AG04450 (cell line): ENCODE measurements at regions of chr2 and their contacts with region 1.

Region 1: GRCh38 chr2:71331581-71332434 is at the start of gene ZNF638:
- DNase-seq: peak; percentile 78
- H3K4me3 ChIP-seq: peak within 1 kb of the TSS; percentile 98
- H3K27ac ChIP-seq: peak within 1 kb of the TSS; percentile 80
- H3K27me3 ChIP-seq: peaks cover 2% of the 10 kb centered on the region
- CTCF ChIP-seq: peak; percentile 67
- polyA plus RNA-seq, gene ZNF638: 75.3 and 105 TPM in 2 replicates

Region 2: GRCh38 chr2:71122387-71123298 is 209.2 kb before region 1 on chr2:
- CTCF ChIA-PET with region 1: no interaction called
- POLR2A ChIA-PET with region 1: no interaction called
- DNase-seq: no peak
- H3K4me3 ChIP-seq: no peak overlapping the region
- H3K27ac ChIP-seq: no peak overlapping the region
- H3K27me3 ChIP-seq: no peaks in the 10 kb centered on the region
- CTCF ChIP-seq: no peak

Region 3: DNA sequence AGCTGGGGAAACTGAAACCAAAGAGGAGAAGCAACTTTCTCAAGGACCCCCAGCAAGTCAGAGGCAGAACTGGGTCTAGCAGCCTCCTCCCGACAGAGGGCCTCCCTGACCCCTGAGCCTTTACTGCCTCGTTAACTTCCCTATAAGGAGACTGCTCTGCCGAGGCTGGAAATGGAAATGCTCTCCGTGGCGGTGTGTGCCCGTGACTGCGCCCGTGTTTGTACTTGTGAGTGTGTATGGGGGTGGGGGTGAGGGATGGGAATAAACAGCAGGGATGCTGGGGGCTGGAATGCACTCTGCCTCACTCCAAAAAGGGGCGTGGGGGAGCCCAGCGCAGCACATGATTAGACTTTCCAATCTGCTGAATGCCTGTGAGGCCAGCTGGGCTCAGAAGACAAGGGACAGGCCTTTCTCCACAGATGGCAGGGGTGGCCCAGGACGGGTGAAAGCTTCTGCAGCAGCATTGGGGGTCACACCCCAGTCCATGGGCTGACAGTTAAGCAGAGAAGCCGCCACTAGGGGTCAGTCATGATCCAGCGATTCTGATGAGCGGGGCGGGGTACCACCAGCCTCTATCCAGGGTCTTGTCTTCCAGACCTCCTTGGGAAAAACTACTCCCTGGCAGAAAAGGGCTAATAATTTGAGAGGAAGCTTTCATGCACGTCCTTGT is 174.5 kb before region 1 on chr2:
- CTCF ChIA-PET with region 1: interaction called, 23 read pairs
- POLR2A ChIA-PET with region 1: interaction called, 4 read pairs
- DNase-seq: no peak
- H3K4me3 ChIP-seq: peak overlapping the region; percentile 44
- H3K27ac ChIP-seq: no peak overlapping the region
- H3K27me3 ChIP-seq: peaks cover 6% of the 10 kb centered on the region
- CTCF ChIP-seq: peak; percentile 69

Region 4: DNA sequence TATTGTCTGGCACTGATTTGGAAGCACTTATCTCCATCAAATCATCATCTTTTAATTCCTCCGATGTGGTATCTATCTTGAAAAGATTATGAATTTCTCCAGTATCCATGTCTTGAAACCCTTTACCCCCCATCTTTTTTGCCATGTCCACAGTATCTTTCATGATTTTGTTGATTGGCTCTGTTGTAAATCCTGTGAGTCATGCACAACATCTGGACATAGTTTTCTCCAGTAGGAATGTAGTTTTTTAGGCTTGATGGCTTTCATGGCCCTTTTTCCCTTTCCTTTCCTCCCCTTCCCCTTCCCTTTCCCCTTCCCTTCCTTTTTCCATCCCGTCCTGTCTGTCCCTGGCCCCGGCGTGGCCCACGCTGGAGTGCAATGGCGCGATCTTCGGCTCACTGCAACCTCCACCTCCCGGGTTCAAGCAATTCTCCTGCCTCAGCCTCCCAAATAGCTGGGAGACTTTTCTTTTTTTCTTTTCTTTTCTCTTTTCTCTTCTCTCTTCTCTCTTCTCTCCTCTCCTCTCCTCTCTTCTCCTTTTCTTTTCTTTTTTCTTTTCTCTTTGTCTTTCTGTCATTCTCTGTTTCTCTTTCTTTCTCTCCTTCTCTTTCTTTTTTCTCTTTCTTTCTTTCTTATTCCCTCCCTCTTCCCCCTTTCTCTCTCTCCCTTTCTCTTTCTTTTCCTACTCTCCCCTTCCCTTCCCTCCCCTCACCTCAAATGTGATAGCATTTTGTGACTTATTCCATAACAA is 18.6 kb before region 1 on chr2:
- CTCF ChIA-PET with region 1: interaction called, 18 read pairs
- POLR2A ChIA-PET with region 1: no interaction called
- DNase-seq: no peak
- H3K4me3 ChIP-seq: no peak overlapping the region
- H3K27ac ChIP-seq: no peak overlapping the region
- H3K27me3 ChIP-seq: no peaks in the 10 kb centered on the region
- CTCF ChIP-seq: no peak

Region 5: GRCh38 chr2:71372042-71372441 is 40.2 kb after region 1 on chr2:
- CTCF ChIA-PET with region 1: interaction called, 30 read pairs
- POLR2A ChIA-PET with region 1: no interaction called
- DNase-seq: no peak
- H3K4me3 ChIP-seq: no peak overlapping the region
- H3K27ac ChIP-seq: no peak overlapping the region
- H3K27me3 ChIP-seq: no peaks in the 10 kb centered on the region
- CTCF ChIP-seq: no peak

Region 6: GRCh38 chr2:71402417-71402816 is 70.6 kb after region 1 on chr2:
- CTCF ChIA-PET with region 1: interaction called, 10 read pairs
- POLR2A ChIA-PET with region 1: interaction called, 6 read pairs
- DNase-seq: no peak
- H3K4me3 ChIP-seq: no peak overlapping the region
- H3K27ac ChIP-seq: no peak overlapping the region
- H3K27me3 ChIP-seq: no peaks in the 10 kb centered on the region
- CTCF ChIP-seq: no peak

Region 7: DNA sequence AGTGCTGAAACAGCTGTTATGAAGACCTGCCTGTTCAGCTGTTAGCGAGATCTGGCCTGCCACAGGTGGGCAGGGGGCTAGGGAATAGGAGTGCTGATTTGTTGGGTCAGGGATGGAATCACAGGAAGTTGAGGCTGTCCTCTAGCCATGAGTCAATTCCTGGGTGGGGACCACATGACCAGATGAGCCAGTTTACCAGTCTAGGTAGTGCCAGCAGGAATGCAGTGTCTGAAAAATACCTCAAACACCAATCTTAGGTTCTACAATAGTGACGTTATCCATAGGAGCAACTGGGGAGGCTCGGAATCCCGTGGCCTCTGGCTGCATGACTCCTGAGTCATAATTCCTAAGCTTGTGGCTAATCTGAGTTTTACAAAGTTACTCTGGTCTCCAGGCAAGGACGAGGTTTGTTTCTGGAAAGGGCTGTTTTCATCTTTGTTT is 166.5 kb after region 1 on chr2:
- CTCF ChIA-PET with region 1: interaction called, 12 read pairs
- POLR2A ChIA-PET with region 1: no interaction called
- DNase-seq: peak; percentile 26
- H3K4me3 ChIP-seq: no peak overlapping the region
- H3K27ac ChIP-seq: peak overlapping the region; percentile 53
- H3K27me3 ChIP-seq: no peaks in the 10 kb centered on the region
- CTCF ChIP-seq: no peak

Region 8: GRCh38 chr2:71578767-71579342 is 247.0 kb after region 1 on chr2:
- CTCF ChIA-PET with region 1: no interaction called
- POLR2A ChIA-PET with region 1: no interaction called
- DNase-seq: no peak
- H3K4me3 ChIP-seq: no peak overlapping the region
- H3K27ac ChIP-seq: no peak overlapping the region
- H3K27me3 ChIP-seq: peaks cover 10% of the 10 kb centered on the region
- CTCF ChIP-seq: no peak